CD8-positive, alpha-beta T cell (primary cell): ENCODE measurements at regions of chr15 and their contacts with region 1.

Region 1: GRCh38 chr15:89057504-89058133 is 30.6 kb upstream of the ABHD2 start:
- DNase-seq: peak; percentile 61 to 90 (median 82)
- ATAC-seq: peak; percentile 100
- H3K4me3 ChIP-seq: no peak overlapping the region
- H3K4me3 Mint-ChIP-seq: no peak overlapping the region
- H3K27ac ChIP-seq: no peak overlapping the region
- H3K27ac Mint-ChIP-seq: no peak overlapping the region
- H3K4me1 ChIP-seq: no peaks in the 10 kb centered on the region
- H3K4me1 Mint-ChIP-seq: peaks cover 2% of the 10 kb centered on the region
- H3K27me3 ChIP-seq: no peaks in the 10 kb centered on the region
- H3K27me3 Mint-ChIP-seq: no peaks in the 10 kb centered on the region
- CTCF ChIP-seq: peak; percentile 99

Region 2: GRCh38 chr15:89023311-89023961 is 34.2 kb before region 1 on chr15:
- CTCF ChIA-PET with region 1: interaction called, 10 read pairs
- POLR2A ChIA-PET with region 1: no interaction called
- intact Hi-C with region 1: no loop called
- DNase-seq: peak in 1 of 9 experiments; percentile 31
- ATAC-seq: no peak
- H3K4me3 ChIP-seq: no peak overlapping the region
- H3K4me3 Mint-ChIP-seq: no peak overlapping the region
- H3K27ac ChIP-seq: no peak overlapping the region
- H3K27ac Mint-ChIP-seq: no peak overlapping the region
- H3K4me1 ChIP-seq: no peaks in the 10 kb centered on the region
- H3K4me1 Mint-ChIP-seq: no peaks in the 10 kb centered on the region
- H3K27me3 ChIP-seq: no peaks in the 10 kb centered on the region
- H3K27me3 Mint-ChIP-seq: peaks cover 2% of the 10 kb centered on the region
- CTCF ChIP-seq: no peak

Region 3: GRCh38 chr15:89167267-89168176 is 109.9 kb after region 1 on chr15:
- CTCF ChIA-PET with region 1: interaction called, 109 read pairs
- POLR2A ChIA-PET with region 1: no interaction called
- intact Hi-C with region 1: no loop called
- DNase-seq: no peak
- ATAC-seq: no peak
- H3K4me3 ChIP-seq: no peak overlapping the region
- H3K4me3 Mint-ChIP-seq: no peak overlapping the region
- H3K27ac ChIP-seq: no peak overlapping the region
- H3K27ac Mint-ChIP-seq: peak overlapping the region; percentile 50
- H3K4me1 ChIP-seq: no peaks in the 10 kb centered on the region
- H3K4me1 Mint-ChIP-seq: peaks cover 3% of the 10 kb centered on the region
- H3K27me3 ChIP-seq: no peaks in the 10 kb centered on the region
- H3K27me3 Mint-ChIP-seq: no peaks in the 10 kb centered on the region
- CTCF ChIP-seq: no peak